ENCODE measurements at regions of chr3 and their contacts with region 1.

Region 1: GRCh38 chr3:128497387-128498126 is 4.6 kb upstream of the GATA2 start:
- DNase-seq: peak; percentile 83
- ATAC-seq: peak; percentile 74

Region 2: GRCh38 chr3:128095222-128095703 is 402.3 kb before region 1 on chr3:
- intact Hi-C with region 1: loop called in 1 of 2 experiments (anchors 5 kb)
- DNase-seq: peak; percentile 86
- ATAC-seq: peak; percentile 97 to 98

Region 3: GRCh38 chr3:128170805-128171516 is 326.6 kb before region 1 on chr3:
- intact Hi-C with region 1: loop called (anchors 5 kb)
- DNase-seq: peak; percentile 65
- ATAC-seq: peak; percentile 79 to 82

Region 4: GRCh38 chr3:128307029-128307633 is 190.4 kb before region 1 on chr3:
- intact Hi-C with region 1: loop called in 1 of 2 experiments (anchors 10 kb)
- DNase-seq: no peak
- ATAC-seq: no peak

Region 5: GRCh38 chr3:128426128-128426921 is 71.2 kb before region 1 on chr3:
- intact Hi-C with region 1: loop called (anchors 2 to 5 kb)
- DNase-seq: peak; percentile 51
- ATAC-seq: peak; percentile 91 to 93